ENCODE measurements at regions of chr6 and their contacts with region 1.

Region 1: GRCh38 chr6:107877968-107878367 is 53.9 kb upstream of the SCML4 start:
- DNase-seq: no peak
- ATAC-seq: peak; percentile 68
- H3K4me3 Mint-ChIP-seq: no peak overlapping the region
- H3K27ac Mint-ChIP-seq: peak overlapping the region; percentile 75
- H3K4me1 Mint-ChIP-seq: peaks cover 15% of the 10 kb centered on the region
- H3K27me3 Mint-ChIP-seq: no peaks in the 10 kb centered on the region
- CTCF ChIP-seq: no peak

Region 2: GRCh38 chr6:107800564-107801164 is 77.3 kb before region 1 on chr6:
- CTCF ChIA-PET with region 1: no interaction called
- POLR2A ChIA-PET with region 1: no interaction called
- intact Hi-C with region 1: no loop called
- DNase-seq: no peak
- ATAC-seq: no peak
- H3K4me3 Mint-ChIP-seq: no peak overlapping the region
- H3K27ac Mint-ChIP-seq: no peak overlapping the region
- H3K4me1 Mint-ChIP-seq: no peaks in the 10 kb centered on the region
- H3K27me3 Mint-ChIP-seq: no peaks in the 10 kb centered on the region
- CTCF ChIP-seq: no peak

Region 3: GRCh38 chr6:107866606-107867301 is 11.2 kb before region 1 on chr6:
- CTCF ChIA-PET with region 1: interaction called, 11 read pairs
- POLR2A ChIA-PET with region 1: no interaction called
- intact Hi-C with region 1: loop called (anchors 1 kb)
- DNase-seq: no peak
- ATAC-seq: peak; percentile 49
- H3K4me3 Mint-ChIP-seq: peak overlapping the region; percentile 66
- H3K27ac Mint-ChIP-seq: no peak overlapping the region
- H3K4me1 Mint-ChIP-seq: peaks cover 45% of the 10 kb centered on the region
- H3K27me3 Mint-ChIP-seq: peaks cover 3% of the 10 kb centered on the region
- CTCF ChIP-seq: no peak

Region 4: GRCh38 chr6:108235127-108235526 is 357.2 kb after region 1 on chr6:
- CTCF ChIA-PET with region 1: no interaction called
- POLR2A ChIA-PET with region 1: no interaction called
- intact Hi-C with region 1: no loop called
- DNase-seq: no peak
- ATAC-seq: no peak
- H3K4me3 Mint-ChIP-seq: no peak overlapping the region
- H3K27ac Mint-ChIP-seq: no peak overlapping the region
- H3K4me1 Mint-ChIP-seq: peaks cover 39% of the 10 kb centered on the region
- H3K27me3 Mint-ChIP-seq: no peaks in the 10 kb centered on the region
- CTCF ChIP-seq: no peak

Measured in activated B cell treated with CpG ODN at 0.5 μM for 24 hours (primary cell).